ENCODE measurements at regions of chr12 and their contacts with region 1.

Region 1: DNA sequence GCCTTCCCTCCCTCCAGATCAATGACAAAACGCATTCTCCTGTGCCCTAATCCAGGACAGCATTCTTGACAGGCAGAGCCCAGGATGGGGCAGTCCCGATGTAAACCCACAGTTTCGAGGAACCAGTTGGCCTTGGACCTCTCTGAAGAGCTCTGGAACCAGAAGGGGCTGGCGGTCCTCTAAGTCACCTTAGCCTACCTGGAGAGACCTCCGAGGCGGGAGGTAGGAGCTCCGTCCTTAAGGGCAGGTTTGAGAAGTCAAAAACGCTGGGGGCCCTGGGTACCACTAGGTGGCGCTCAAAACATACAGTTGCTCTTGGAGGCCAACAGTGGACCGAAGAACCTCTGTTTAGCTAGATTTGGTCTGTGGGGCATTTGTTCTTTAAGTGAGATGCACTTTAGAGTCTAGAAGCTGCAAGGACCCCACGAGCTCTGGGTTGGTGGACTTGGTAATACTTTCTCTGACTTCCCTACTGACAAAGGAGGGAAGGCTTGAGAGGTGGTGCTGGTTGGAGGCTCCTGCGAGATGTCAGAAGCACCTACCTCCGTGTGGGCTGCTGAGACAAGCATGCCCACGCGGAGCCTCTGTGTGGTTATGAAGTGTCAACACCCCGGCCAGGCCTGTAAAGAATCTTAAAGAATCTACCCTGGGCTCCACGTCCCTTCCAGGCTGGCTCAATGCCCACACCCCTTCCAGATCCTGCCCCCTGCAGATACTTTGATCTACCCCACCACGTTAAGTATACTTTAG is 74.8 kb upstream of the CHST11 start:
- DNase-seq: peak; percentile 73 to 80
- ATAC-seq: peak; percentile 72 to 92 (median 88)
- H3K4me3 ChIP-seq: no peak overlapping the region
- H3K27ac ChIP-seq: no peak overlapping the region
- H3K4me1 ChIP-seq: peaks cover 0 to 10% (median 0%) of the 10 kb centered on the region in 9 donors
- H3K27me3 ChIP-seq: peaks cover 0 to 4% (median 0%) of the 10 kb centered on the region in 7 donors
- CTCF ChIP-seq: peak; percentile 91 to 99 (median 96)

Region 2: GRCh38 chr12:104303538-104304151 is 78.3 kb before region 1 on chr12 and contains the start of gene EID3:
- intact Hi-C with region 1: no loop called
- DNase-seq: peak; percentile 90 to 93
- ATAC-seq: peak; percentile 99 to 100 (median 100)
- H3K4me3 ChIP-seq: peak within 1 kb of the TSS; percentile 31 to 66 (median 56)
- H3K27ac ChIP-seq: peak within 1 kb of the TSS in 9 of 10 donors; percentile 42 to 80 (median 65)
- H3K4me1 ChIP-seq: peaks cover 0 to 72% (median 59%) of the 10 kb centered on the region in 9 donors
- H3K27me3 ChIP-seq: no peaks in the 10 kb centered on the region
- CTCF ChIP-seq: peak in 1 of 9 donors; percentile 6
- total RNA-seq, gene EID3: 0.52 to 1.6 (median 1.0) TPM

Region 3: GRCh38 chr12:104671407-104672098 is 289.6 kb after region 1 on chr12:
- intact Hi-C with region 1: loop called in 2 of 10 experiments (anchors 10 kb)
- DNase-seq: peak; percentile 73 to 84
- ATAC-seq: peak; percentile 30 to 74 (median 56)
- H3K4me3 ChIP-seq: no peak overlapping the region
- H3K27ac ChIP-seq: peak overlapping the region; percentile 11 to 88 (median 63)
- H3K4me1 ChIP-seq: peaks cover 30 to 78% (median 65%) of the 10 kb centered on the region in 9 donors
- H3K27me3 ChIP-seq: no peaks in the 10 kb centered on the region
- CTCF ChIP-seq: no peak

Region 4: DNA sequence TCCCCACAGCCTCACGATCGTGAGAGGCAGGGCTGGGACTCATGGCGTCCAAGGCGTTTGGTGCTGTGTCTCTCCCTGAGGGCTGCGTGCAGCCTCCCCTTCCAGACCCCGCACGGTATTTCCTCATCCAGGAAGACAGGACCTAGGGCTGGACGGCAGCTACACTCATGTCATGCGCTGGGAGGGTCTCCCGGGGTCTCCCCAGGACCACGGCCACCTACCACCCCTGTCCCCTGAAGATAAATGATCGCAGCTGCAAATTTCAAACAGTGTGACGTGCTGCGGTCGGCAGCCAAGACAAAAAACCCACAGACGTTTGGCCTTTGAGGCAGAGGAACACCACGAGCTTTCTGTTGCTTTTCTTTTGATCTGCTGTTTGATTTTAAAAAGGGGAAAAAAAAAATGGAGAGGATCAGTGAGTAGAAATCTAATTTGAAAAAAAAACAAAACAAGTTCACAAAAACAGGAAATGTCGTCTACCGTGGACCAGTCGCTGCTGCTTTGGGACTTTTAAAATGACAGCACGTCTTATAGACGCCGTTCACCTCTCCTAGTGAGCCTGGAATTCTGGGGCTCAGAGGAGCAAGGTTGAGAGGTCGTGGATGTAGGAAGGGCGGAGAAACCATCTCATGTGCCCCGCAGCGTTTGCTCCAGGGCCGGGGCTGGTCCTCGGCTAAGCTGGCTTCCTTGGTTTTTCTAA is 338.6 kb after region 1 on chr12:
- intact Hi-C with region 1: loop called in 1 of 10 experiments (anchors 10 kb)
- DNase-seq: no peak
- ATAC-seq: peak in 7 of 8 donors; percentile 30 to 58 (median 39)
- H3K4me3 ChIP-seq: peak overlapping the region in 9 of 10 donors; percentile 13 to 49 (median 41)
- H3K27ac ChIP-seq: peak overlapping the region in 7 of 10 donors; percentile 34 to 88 (median 43)
- H3K4me1 ChIP-seq: peaks cover 0 to 31% (median 16%) of the 10 kb centered on the region in 9 donors
- H3K27me3 ChIP-seq: no peaks in the 10 kb centered on the region
- CTCF ChIP-seq: no peak

Region 5: DNA sequence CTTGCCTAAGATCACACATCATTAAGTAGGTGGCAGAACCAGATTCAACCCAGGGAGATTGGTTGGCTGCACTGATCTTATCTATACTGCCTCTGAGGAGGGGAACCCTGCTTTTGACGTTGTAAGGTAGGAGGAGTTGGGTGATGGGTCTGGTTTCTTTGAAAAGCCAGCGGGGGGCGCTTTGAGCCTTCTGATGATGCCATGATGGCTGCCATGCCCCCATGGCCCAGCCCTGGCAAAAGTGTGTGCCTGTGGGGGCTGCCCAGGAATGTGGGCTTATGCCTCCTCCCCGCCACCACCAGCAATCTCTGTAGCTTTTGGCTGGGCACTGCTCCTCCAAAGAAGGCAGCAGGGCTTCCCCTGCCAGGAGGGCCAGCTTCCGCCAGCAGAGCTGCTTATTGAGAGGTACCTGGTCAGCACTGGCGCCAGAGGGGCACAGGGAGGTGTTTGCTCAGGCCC is 351.8 kb after region 1 on chr12:
- intact Hi-C with region 1: loop called in 2 of 10 experiments (anchors 10 kb)
- DNase-seq: no peak
- ATAC-seq: peak in 3 of 8 donors; percentile 25 to 52 (median 31)
- H3K4me3 ChIP-seq: no peak overlapping the region
- H3K27ac ChIP-seq: no peak overlapping the region
- H3K4me1 ChIP-seq: peaks cover 0 to 43% (median 4%) of the 10 kb centered on the region in 9 donors
- H3K27me3 ChIP-seq: no peaks in the 10 kb centered on the region
- CTCF ChIP-seq: peak in 4 of 9 donors; percentile 25 to 32 (median 28)

Region 6: GRCh38 chr12:105053116-105053572 is 671.2 kb after region 1 on chr12:
- intact Hi-C with region 1: loop called (anchors 2 to 10 kb)
- DNase-seq: peak; percentile 51 to 55
- ATAC-seq: peak in 5 of 8 donors; percentile 39 to 63 (median 47)
- H3K4me3 ChIP-seq: no peak overlapping the region
- H3K27ac ChIP-seq: no peak overlapping the region
- H3K4me1 ChIP-seq: peaks cover 0 to 4% (median 0%) of the 10 kb centered on the region in 9 donors
- H3K27me3 ChIP-seq: no peaks in the 10 kb centered on the region
- CTCF ChIP-seq: peak; percentile 71 to 96 (median 91)

Measured in heart right ventricle (tissue), 16 donors.